GM10248 (cell line): ENCODE measurements at regions of chr3 and their contacts with region 1.

Region 1: GRCh38 chr3:105458518-105459215 is 92.0 kb downstream of the ALCAM start:
- DNase-seq: no peak
- CTCF ChIP-seq: no peak

Region 2: DNA sequence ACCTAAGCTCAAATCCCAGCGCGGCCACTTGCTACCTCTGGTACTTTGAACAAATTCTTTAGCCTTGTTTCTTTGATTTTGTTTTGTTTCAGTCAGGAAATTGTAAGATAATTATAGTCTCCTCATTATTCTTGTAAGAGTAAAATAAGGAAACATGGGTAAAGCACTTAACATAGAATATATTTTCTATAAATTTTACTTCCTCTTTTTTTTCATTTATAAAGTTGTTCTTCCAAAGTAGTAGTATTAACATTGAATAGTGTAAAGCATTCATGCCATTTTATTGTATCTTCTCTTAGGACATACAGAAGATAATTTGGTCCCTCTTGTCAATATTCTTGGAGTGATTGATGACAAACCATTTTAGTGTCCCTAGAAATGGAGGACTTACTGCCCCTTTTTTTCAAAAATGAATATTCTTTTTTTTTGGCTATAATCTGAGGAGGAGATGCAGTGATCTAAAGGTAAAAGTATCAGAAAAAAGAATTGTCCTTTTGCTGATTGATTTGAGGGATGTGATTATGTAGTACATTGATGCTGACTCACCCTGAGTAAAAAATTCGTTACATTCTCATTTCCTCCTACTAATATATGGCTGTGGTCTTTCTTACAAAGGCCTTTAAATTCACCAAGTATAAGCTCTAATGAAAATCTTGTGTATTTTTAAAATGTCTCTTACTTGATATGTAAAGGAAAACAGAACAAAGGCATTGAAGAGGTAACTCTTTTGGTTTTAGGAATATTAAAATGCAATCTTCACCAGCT is 41.0 kb before region 1 on chr3:
- CTCF ChIA-PET with region 1: no interaction called
- POLR2A ChIA-PET with region 1: no interaction called
- DNase-seq: no peak
- CTCF ChIP-seq: no peak

Region 3: GRCh38 chr3:105448338-105448982 is 10.2 kb before region 1 on chr3:
- CTCF ChIA-PET with region 1: interaction called, 18 read pairs
- POLR2A ChIA-PET with region 1: no interaction called
- DNase-seq: no peak
- CTCF ChIP-seq: no peak

Region 4: DNA sequence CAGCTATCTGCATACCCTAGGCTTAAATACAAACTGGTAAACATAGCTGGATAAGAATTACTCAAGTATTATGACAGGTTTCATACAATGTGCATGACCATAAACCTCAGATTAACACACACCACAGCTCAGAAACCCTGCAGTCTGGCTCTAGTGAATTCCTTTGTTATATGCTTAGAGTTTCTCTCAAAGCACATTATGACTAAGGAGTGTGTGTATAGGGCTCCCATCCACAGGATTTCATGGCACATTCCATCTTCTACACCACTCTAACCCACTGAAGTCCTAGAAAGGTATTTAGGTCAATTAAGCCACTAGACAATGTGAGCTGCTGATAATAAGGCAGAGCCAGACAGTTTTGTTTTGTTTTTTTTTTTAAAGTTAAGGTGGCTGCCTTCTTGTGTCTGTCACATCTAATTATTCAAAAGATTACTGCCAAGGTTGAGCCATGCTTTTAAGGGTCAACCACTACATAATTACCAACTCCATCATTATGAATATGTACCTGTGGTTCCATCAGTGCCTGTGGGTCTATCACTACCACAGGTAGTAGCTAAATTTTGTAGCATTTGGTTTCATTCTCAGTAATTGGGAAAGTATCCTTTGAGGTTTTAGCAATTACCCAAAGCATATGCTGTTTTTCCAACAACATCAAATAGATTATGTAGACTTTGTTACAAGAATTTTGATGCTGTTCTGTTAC is 15.0 kb after region 1 on chr3:
- CTCF ChIA-PET with region 1: interaction called, 10 read pairs
- POLR2A ChIA-PET with region 1: no interaction called
- DNase-seq: no peak
- CTCF ChIP-seq: no peak